Calu3 (cell line): ENCODE measurements at regions of chr11 and their contacts with region 1.

Region 1: GRCh38 chr11:65859200-65859811 is 927 bp upstream of the MUS81 start:
- DNase-seq: peak; percentile 97
- H3K4me3 Mint-ChIP-seq: peak overlapping the region; percentile 84
- H3K27ac Mint-ChIP-seq: peak overlapping the region; percentile 95
- H3K4me1 Mint-ChIP-seq: peaks cover 37% of the 10 kb centered on the region
- H3K27me3 Mint-ChIP-seq: no peaks in the 10 kb centered on the region
- CTCF ChIP-seq: no peak

Region 2: GRCh38 chr11:65842144-65842543 is 17.2 kb before region 1 on chr11:
- CTCF ChIA-PET with region 1: interaction called, 10 read pairs
- intact Hi-C with region 1: no loop called
- DNase-seq: no peak
- H3K4me3 Mint-ChIP-seq: no peak overlapping the region
- H3K27ac Mint-ChIP-seq: no peak overlapping the region
- H3K4me1 Mint-ChIP-seq: no peaks in the 10 kb centered on the region
- H3K27me3 Mint-ChIP-seq: no peaks in the 10 kb centered on the region
- CTCF ChIP-seq: no peak

Region 3: DNA sequence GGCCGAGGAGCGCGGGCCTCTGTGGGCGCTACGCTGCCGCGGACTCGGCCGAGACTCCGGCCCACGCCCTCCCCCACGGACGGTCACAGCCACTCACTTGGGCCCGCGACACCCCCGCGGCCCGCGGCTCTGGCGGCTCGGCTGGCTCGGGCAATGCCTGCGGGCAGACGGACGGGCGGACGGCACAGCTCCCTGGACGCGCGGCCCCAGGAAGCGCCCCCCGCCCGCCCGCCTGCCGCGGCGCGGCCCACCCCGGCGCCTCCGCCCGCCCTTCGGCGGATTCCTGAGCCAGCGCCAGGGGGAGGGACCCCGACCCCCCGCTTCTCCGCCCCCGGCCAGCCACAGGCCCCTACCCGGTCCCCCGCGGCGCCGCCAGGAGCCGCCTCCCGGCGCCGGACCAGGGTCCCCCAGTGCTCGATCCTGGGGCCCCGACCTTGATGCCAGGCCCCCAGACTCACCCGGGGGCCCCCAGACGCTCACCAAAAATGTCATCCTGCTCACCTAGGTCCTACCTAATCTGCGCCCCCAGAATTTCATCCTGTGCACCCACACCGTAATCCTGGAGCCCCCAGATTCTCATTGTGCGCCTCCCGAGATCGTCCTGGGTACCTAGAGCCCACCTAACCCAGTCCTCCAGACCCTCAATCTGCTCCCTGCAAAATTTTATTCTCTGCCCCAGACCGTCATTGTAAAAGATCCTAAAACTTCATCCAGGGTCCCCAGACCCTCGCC is 13.4 kb after region 1 on chr11 and contains the start of gene EFEMP2:
- CTCF ChIA-PET with region 1: interaction called, 12 read pairs
- intact Hi-C with region 1: no loop called
- DNase-seq: no peak
- H3K4me3 Mint-ChIP-seq: peak within 1 kb of the TSS; percentile 80
- H3K27ac Mint-ChIP-seq: no peak within 1 kb of the TSS
- H3K4me1 Mint-ChIP-seq: peaks cover 9% of the 10 kb centered on the region
- H3K27me3 Mint-ChIP-seq: peaks cover 29% of the 10 kb centered on the region
- CTCF ChIP-seq: no peak
- total RNA-seq, gene EFEMP2: 3.4 and 3.8 TPM in 2 replicates

Region 4: DNA sequence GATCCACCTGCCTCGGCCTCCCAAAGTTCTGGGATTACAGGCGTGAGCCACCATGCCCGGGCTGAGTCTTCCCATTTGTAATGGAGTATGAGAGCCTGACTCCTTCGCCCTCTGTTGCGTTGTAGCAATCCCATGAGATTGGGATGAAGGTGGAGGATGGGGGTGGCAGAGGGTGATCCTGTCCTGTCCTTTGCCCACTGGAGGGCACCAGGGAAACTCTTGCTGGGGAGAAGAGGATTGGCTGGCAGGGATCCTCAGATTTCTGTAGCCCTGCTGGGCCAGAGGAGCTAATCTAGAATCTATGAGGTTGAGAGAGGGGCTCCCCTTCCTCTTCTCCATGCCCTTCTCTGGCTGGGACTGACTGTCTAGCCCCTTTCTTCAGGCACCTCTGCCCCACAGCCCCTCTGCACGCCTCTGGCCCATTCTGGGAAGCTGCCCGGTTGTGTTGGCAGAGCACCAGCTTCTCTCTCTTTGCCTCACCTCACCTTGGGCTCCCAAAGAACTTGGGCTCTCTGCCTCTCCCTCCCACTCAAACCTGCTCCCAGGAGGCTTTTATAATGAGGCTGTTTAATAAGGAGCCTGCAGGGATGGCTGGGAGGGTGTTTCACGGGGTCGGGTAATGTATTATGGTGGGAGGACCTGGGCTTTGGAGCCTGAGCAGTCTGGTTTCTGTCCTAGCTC is 176.5 kb after region 1 on chr11:
- CTCF ChIA-PET with region 1: no interaction called
- intact Hi-C with region 1: no loop called
- DNase-seq: no peak
- H3K4me3 Mint-ChIP-seq: no peak overlapping the region
- H3K27ac Mint-ChIP-seq: no peak overlapping the region
- H3K4me1 Mint-ChIP-seq: no peaks in the 10 kb centered on the region
- H3K27me3 Mint-ChIP-seq: peaks cover 30% of the 10 kb centered on the region
- CTCF ChIP-seq: no peak